HCT116 (cell line): ENCODE measurements at regions of chr6 and their contacts with region 1.

Region 1: DNA sequence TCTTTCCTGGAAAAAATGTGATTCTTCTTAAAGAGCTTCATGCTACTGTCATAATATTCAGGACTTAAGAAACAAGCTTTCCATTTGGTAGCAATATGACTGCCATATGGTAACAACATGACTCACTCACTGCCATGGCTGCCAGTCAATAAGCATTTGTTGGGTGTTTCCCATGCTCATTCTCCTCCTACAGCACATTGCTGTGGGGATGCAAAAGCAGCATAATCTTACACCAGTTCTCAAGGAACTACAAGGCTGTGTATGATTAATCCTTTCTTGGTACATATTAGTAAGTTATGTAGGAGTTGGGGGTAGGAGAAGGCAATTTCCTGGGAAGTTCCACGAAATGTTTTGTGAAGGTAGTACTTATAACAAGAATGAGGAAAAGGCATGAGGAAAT is 76.7 kb downstream of the CEP162 start:
- DNase-seq: no peak
- ATAC-seq: no peak
- H3K4me3 ChIP-seq: no peak overlapping the region
- H3K27ac ChIP-seq: no peak overlapping the region
- H3K4me1 ChIP-seq: no peaks in the 10 kb centered on the region
- H3K27me3 ChIP-seq: no peaks in the 10 kb centered on the region
- CTCF ChIP-seq: no peak
- POLR2A ChIP-seq: no peak
- RAD21 ChIP-seq: no peak

Region 2: GRCh38 chr6:83735461-83735860 is 415.2 kb before region 1 on chr6:
- CTCF ChIA-PET with region 1: no interaction called
- POLR2A ChIA-PET with region 1: no interaction called
- RAD21 ChIA-PET with region 1: no interaction called
- intact Hi-C with region 1: no loop called
- DNase-seq: no peak
- ATAC-seq: no peak
- H3K4me3 ChIP-seq: no peak overlapping the region
- H3K27ac ChIP-seq: no peak overlapping the region
- H3K4me1 ChIP-seq: no peaks in the 10 kb centered on the region
- H3K27me3 ChIP-seq: no peaks in the 10 kb centered on the region
- CTCF ChIP-seq: no peak
- POLR2A ChIP-seq: no peak
- RAD21 ChIP-seq: no peak

Region 3: DNA sequence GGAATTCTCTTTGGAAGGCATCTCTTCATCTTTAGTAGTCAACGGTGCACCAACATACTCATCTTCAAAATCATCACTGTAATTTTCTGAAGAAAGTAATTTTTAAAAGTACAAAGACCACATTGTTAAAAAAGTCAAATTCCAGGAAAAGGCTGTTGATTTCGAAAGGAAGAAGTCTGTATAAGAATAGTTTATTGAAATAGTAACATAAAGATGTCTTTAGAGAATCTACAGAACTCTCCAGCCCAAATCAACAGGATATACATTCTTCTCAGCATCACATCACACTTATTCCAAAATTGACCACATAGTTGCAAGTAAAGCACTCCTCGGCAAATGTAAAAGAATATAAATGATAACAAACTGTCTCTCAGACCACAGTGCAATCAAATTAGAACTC is 53.3 kb after region 1 on chr6:
- CTCF ChIA-PET with region 1: no interaction called
- POLR2A ChIA-PET with region 1: no interaction called
- RAD21 ChIA-PET with region 1: no interaction called
- intact Hi-C with region 1: loop called (anchors 1 kb)
- DNase-seq: no peak
- ATAC-seq: no peak
- H3K4me3 ChIP-seq: no peak overlapping the region
- H3K27ac ChIP-seq: no peak overlapping the region
- H3K4me1 ChIP-seq: no peaks in the 10 kb centered on the region
- H3K27me3 ChIP-seq: no peaks in the 10 kb centered on the region
- CTCF ChIP-seq: no peak
- POLR2A ChIP-seq: no peak
- RAD21 ChIP-seq: no peak

Region 4: GRCh38 chr6:84284428-84285049 is 133.8 kb after region 1 on chr6:
- CTCF ChIA-PET with region 1: no interaction called
- POLR2A ChIA-PET with region 1: no interaction called
- RAD21 ChIA-PET with region 1: no interaction called
- intact Hi-C with region 1: no loop called
- DNase-seq: peak; percentile 10
- ATAC-seq: peak; percentile 80
- H3K4me3 ChIP-seq: no peak overlapping the region
- H3K27ac ChIP-seq: no peak overlapping the region
- H3K4me1 ChIP-seq: no peaks in the 10 kb centered on the region
- H3K27me3 ChIP-seq: no peaks in the 10 kb centered on the region
- CTCF ChIP-seq: peak; percentile 40 to 73 (median 69); a peak in 5 of 6 replicates
- POLR2A ChIP-seq: no peak
- RAD21 ChIP-seq: peak; percentile 63